B cell (primary cell): ENCODE measurements at regions of chr19 and their contacts with region 1.

Region 1: DNA sequence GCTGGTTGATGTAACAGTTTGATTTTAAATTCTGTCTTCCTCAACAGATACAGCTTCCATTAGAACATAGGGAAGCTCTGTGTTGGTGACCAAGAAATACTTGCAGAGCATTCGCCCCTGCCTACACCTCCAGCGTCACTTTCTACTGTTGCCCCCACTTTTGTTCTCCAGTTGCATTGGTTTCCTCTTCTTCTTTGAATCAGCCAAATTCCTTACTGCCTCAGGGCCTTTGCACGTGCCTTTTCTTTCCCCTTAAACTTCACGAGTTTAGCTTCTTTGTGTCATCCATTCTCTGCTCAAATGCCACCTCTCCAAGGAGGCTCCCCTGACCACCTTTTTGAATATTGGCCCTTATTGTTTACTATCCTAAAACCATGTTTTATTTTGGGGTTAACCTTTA is 5.7 kb downstream of the KLK5 start:
- DNase-seq: no peak
- ATAC-seq: no peak
- H3K4me3 ChIP-seq: no peak overlapping the region
- H3K4me3 Mint-ChIP-seq: no peak overlapping the region
- H3K27ac ChIP-seq: no peak overlapping the region
- H3K27ac Mint-ChIP-seq: no peak overlapping the region
- H3K4me1 ChIP-seq: no peaks in the 10 kb centered on the region
- H3K4me1 Mint-ChIP-seq: no peaks in the 10 kb centered on the region
- H3K27me3 ChIP-seq: no peaks in the 10 kb centered on the region
- H3K27me3 Mint-ChIP-seq: peaks cover 33% of the 10 kb centered on the region
- CTCF ChIP-seq: no peak

Region 2: GRCh38 chr19:50315773-50316448 is 631.2 kb before region 1 on chr19:
- CTCF ChIA-PET with region 1: no interaction called
- POLR2A ChIA-PET with region 1: interaction called, 10 read pairs
- intact Hi-C with region 1: no loop called
- DNase-seq: peak; percentile 61
- ATAC-seq: no peak
- H3K4me3 ChIP-seq: peak overlapping the region in 2 of 5 experiments; percentile 5 to 23
- H3K4me3 Mint-ChIP-seq: peak overlapping the region; percentile 62
- H3K27ac ChIP-seq: no peak overlapping the region
- H3K27ac Mint-ChIP-seq: no peak overlapping the region
- H3K4me1 ChIP-seq: peaks cover 24 to 34% of the 10 kb centered on the region in 2 donors
- H3K4me1 Mint-ChIP-seq: peaks cover 27% of the 10 kb centered on the region
- H3K27me3 ChIP-seq: peaks cover 0 to 55% (median 35%) of the 10 kb centered on the region in 4 experiments
- H3K27me3 Mint-ChIP-seq: peaks cover 37% of the 10 kb centered on the region
- CTCF ChIP-seq: no peak

Region 3: DNA sequence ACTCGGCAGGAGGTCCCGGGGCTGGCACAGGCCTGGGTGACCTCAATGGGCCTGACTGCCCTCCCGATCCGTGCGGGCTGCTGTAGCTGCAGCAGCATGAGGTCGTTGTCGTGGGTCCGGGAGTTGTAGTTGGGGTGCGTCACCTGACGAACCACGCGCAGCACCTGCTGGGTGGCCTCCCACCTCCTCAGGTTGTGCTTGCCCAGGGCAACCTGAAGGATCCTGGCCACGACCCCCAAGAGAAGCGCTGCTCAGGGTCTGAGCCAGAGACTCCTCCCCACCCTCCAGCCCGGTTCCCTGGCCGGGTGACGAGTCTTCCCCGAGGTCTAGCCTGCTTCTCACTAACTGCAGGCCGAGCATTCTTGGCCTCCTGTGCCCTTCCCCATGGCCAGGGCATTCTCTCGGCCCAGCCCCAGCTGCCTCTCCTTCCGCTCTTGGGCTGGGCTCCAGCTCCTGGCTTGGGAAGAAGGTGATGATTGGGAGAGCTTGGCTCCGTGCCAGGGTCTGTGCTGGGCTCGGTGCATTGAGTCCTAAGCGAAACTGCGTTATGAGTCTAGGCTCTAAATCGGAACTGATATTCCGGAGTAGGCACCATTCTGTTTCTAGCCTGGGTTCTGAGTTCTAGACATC is 132.5 kb after region 1 on chr19:
- CTCF ChIA-PET with region 1: no interaction called
- POLR2A ChIA-PET with region 1: no interaction called
- intact Hi-C with region 1: no loop called
- DNase-seq: no peak
- ATAC-seq: no peak
- H3K4me3 ChIP-seq: no peak overlapping the region
- H3K4me3 Mint-ChIP-seq: no peak overlapping the region
- H3K27ac ChIP-seq: no peak overlapping the region
- H3K27ac Mint-ChIP-seq: no peak overlapping the region
- H3K4me1 ChIP-seq: no peaks in the 10 kb centered on the region
- H3K4me1 Mint-ChIP-seq: no peaks in the 10 kb centered on the region
- H3K27me3 ChIP-seq: no peaks in the 10 kb centered on the region
- H3K27me3 Mint-ChIP-seq: peaks cover 16% of the 10 kb centered on the region
- CTCF ChIP-seq: no peak

Region 4: DNA sequence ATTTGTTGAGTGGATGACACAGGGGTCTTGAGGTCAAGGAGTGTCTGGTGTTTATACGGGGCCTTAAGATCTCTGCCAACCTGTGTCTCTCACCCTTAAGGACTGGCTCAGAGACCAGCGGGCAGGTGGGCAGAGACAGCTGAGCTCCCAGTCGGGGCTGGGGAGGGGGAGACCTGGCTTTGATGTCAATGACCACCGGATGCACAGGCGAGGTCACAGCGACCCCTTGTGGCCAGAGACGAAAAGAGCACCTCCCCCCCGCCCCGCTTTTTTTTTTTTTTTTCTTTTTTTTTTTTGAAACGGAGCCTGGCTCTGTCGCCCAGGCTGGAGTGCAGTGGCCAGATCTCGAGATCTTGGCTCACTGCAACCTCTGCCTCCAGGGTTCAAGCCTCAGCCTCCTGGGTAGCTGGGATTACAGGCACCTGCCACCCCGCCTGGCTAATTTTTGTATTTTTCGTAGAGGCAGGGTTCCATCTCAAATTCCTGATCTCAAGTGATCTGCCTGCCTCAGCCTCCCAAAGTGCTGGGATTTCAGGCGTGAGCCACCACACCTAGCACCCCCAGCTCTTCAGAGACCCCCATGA is 147.7 kb after region 1 on chr19:
- CTCF ChIA-PET with region 1: no interaction called
- POLR2A ChIA-PET with region 1: no interaction called
- intact Hi-C with region 1: no loop called
- DNase-seq: peak; percentile 53
- ATAC-seq: no peak
- H3K4me3 ChIP-seq: no peak overlapping the region
- H3K4me3 Mint-ChIP-seq: no peak overlapping the region
- H3K27ac ChIP-seq: no peak overlapping the region
- H3K27ac Mint-ChIP-seq: no peak overlapping the region
- H3K4me1 ChIP-seq: no peaks in the 10 kb centered on the region
- H3K4me1 Mint-ChIP-seq: peaks cover 8% of the 10 kb centered on the region
- H3K27me3 ChIP-seq: no peaks in the 10 kb centered on the region
- H3K27me3 Mint-ChIP-seq: no peaks in the 10 kb centered on the region
- CTCF ChIP-seq: peak; percentile 72